Activated CD4-positive, alpha-beta memory T cell treated with anti-CD3 and anti-CD28 coated beads, Interleukin-2, amount 10 ng/mL, durations not matched to agents 7 days and 5 days (primary cell): ENCODE measurements at regions of chr1 and their contacts with region 1.

Region 1: DNA sequence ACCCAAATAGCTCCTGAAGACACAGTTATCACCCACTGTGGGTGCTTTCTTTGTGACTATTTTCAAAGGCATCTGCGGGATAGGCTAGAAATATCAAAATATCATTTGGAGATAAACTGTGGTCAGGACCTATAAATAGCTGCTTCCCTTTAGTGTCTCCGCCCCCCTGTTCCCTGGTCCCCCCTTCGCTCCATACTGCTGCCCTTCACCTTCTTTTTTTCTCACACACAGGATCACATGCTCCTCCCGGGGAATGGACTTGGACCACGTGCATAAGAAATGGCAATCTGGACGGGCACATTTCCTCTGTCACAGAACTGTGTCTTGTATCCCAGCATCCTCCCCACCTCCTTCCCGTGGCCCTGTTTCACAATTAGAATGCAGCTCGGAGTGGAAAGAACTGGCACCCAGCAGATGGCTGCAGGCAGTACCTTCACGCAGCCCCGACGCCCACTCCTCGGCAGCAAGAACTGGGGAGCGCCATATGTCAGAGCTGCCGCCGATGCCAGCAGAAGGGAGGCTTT is 68.8 kb upstream of the SSX2IP start:
- DNase-seq: no peak
- H3K4me3 Mint-ChIP-seq: no peak overlapping the region
- H3K27ac Mint-ChIP-seq: no peak overlapping the region
- H3K4me1 Mint-ChIP-seq: peaks cover 7% of the 10 kb centered on the region
- H3K27me3 Mint-ChIP-seq: peaks cover 16% of the 10 kb centered on the region

Region 2: GRCh38 chr1:84772428-84772943 is 13.5 kb after region 1 on chr1:
- CTCF ChIA-PET with region 1: interaction called, 16 read pairs
- POLR2A ChIA-PET with region 1: no interaction called
- DNase-seq: peak; percentile 75
- H3K4me3 Mint-ChIP-seq: no peak overlapping the region
- H3K27ac Mint-ChIP-seq: no peak overlapping the region
- H3K4me1 Mint-ChIP-seq: no peaks in the 10 kb centered on the region
- H3K27me3 Mint-ChIP-seq: peaks cover 22% of the 10 kb centered on the region

Region 3: GRCh38 chr1:84795966-84796600 is 37.1 kb after region 1 on chr1:
- CTCF ChIA-PET with region 1: no interaction called
- POLR2A ChIA-PET with region 1: no interaction called
- DNase-seq: no peak
- H3K4me3 Mint-ChIP-seq: no peak overlapping the region
- H3K27ac Mint-ChIP-seq: no peak overlapping the region
- H3K4me1 Mint-ChIP-seq: no peaks in the 10 kb centered on the region
- H3K27me3 Mint-ChIP-seq: peaks cover 6% of the 10 kb centered on the region